ENCODE measurements at regions of chr5 and their contacts with region 1.

Region 1: GRCh38 chr5:75566710-75567309 is 44.4 kb upstream of the ANKDD1B start:
- DNase-seq: peak; percentile 80
- ATAC-seq: peak; percentile 67
- H3K4me3 ChIP-seq: peak overlapping the region; percentile 33 to 51
- H3K27ac ChIP-seq: peak overlapping the region; percentile 80
- H3K4me1 ChIP-seq: peaks cover 29 to 38% of the 10 kb centered on the region in 2 experiments
- H3K27me3 ChIP-seq: no peaks in the 10 kb centered on the region
- CTCF ChIP-seq: no peak
- POLR2A ChIP-seq: no peak
- RAD21 ChIP-seq: 0 out of 2 replicates have a peak, but pooled peaks have one; percentile 5

Region 2: GRCh38 chr5:75281716-75282465 is 284.9 kb before region 1 on chr5:
- CTCF ChIA-PET with region 1: no interaction called
- POLR2A ChIA-PET with region 1: no interaction called
- RAD21 ChIA-PET with region 1: no interaction called
- intact Hi-C with region 1: no loop called
- DNase-seq: peak; percentile 81
- ATAC-seq: peak; percentile 83
- H3K4me3 ChIP-seq: no peak overlapping the region
- H3K27ac ChIP-seq: no peak overlapping the region
- H3K4me1 ChIP-seq: peaks cover 2 to 29% of the 10 kb centered on the region in 2 experiments; a peak in 3 of 4 replicates
- H3K27me3 ChIP-seq: no peaks in the 10 kb centered on the region
- CTCF ChIP-seq: no peak
- POLR2A ChIP-seq: no peak
- RAD21 ChIP-seq: peak; percentile 22; the same call in 1 of the 2 replicates

Region 3: GRCh38 chr5:75511435-75512384 is 55.1 kb before region 1 on chr5 and contains the starts of genes CERT1 and POLK:
- CTCF ChIA-PET with region 1: no interaction called
- POLR2A ChIA-PET with region 1: no interaction called
- RAD21 ChIA-PET with region 1: no interaction called
- intact Hi-C with region 1: loop called (anchors 5 kb)
- DNase-seq: peak; percentile 96
- ATAC-seq: peak; percentile 98
- H3K4me3 ChIP-seq: peak within 1 kb of the TSS; percentile 83 to 90
- H3K27ac ChIP-seq: peak within 1 kb of the TSS; percentile 63
- H3K4me1 ChIP-seq: peaks cover 7 to 18% of the 10 kb centered on the region in 2 experiments; a peak in 3 of 4 replicates
- H3K27me3 ChIP-seq: no peaks in the 10 kb centered on the region
- CTCF ChIP-seq: no peak
- POLR2A ChIP-seq: peak; percentile 55
- RAD21 ChIP-seq: no peak
- total RNA-seq, gene CERT1: 22.8 TPM
- total RNA-seq, gene POLK: 17.3 TPM